ENCODE measurements at regions of chr2 and their contacts with region 1.

Region 1: GRCh38 chr2:196431957-196432356 is 207.6 kb upstream of the CCDC150 start:
- DNase-seq: peak; percentile 56
- ATAC-seq: peak; percentile 35; the same call in 1 of the 2 replicates
- H3K4me3 ChIP-seq: no peak overlapping the region
- H3K27ac ChIP-seq: no peak overlapping the region
- H3K4me1 ChIP-seq: no peaks in the 10 kb centered on the region
- H3K27me3 ChIP-seq: no peaks in the 10 kb centered on the region
- CTCF ChIP-seq: peak; percentile 73

Region 2: GRCh38 chr2:196758474-196759377 is 326.8 kb after region 1 on chr2:
- CTCF ChIA-PET with region 1: no interaction called
- POLR2A ChIA-PET with region 1: no interaction called
- intact Hi-C with region 1: loop called (anchors 5 kb)
- DNase-seq: peak; percentile 40
- ATAC-seq: peak; percentile 69
- H3K4me3 ChIP-seq: no peak overlapping the region
- H3K27ac ChIP-seq: no peak overlapping the region
- H3K4me1 ChIP-seq: no peaks in the 10 kb centered on the region
- H3K27me3 ChIP-seq: no peaks in the 10 kb centered on the region
- CTCF ChIP-seq: peak; percentile 67

Measured in PC-3 (cell line).